ENCODE measurements at regions of chr11 and their contacts with region 1.

Region 1: GRCh38 chr11:131246663-131247062 is 123.8 kb upstream of the NTM start:
- DNase-seq: peak; percentile 31 to 90
- H3K4me3 ChIP-seq: peak overlapping the region in 1 of 4 experiments; percentile 32; a peak in 1 of 8 replicates
- H3K27ac ChIP-seq: no peak overlapping the region
- H3K4me1 ChIP-seq: peaks cover 2 to 6% (median 3%) of the 10 kb centered on the region in 4 experiments; a peak in 4 of 7 replicates
- H3K27me3 ChIP-seq: no peaks in the 10 kb centered on the region
- CTCF ChIP-seq: peak; percentile 87 to 97 (median 93)
- EP300 ChIP-seq: no peak
- POLR2A ChIP-seq: no peak
- RAD21 ChIP-seq: peak; percentile 83 to 89

Region 2: GRCh38 chr11:130999997-131000770 is 246.5 kb before region 1 on chr11:
- CTCF ChIA-PET with region 1: no interaction called
- POLR2A ChIA-PET with region 1: no interaction called
- DNase-seq: no peak
- H3K4me3 ChIP-seq: no peak overlapping the region
- H3K27ac ChIP-seq: no peak overlapping the region
- H3K4me1 ChIP-seq: no peaks in the 10 kb centered on the region
- H3K27me3 ChIP-seq: no peaks in the 10 kb centered on the region
- CTCF ChIP-seq: no peak
- EP300 ChIP-seq: no peak
- POLR2A ChIP-seq: no peak
- RAD21 ChIP-seq: no peak

Region 3: DNA sequence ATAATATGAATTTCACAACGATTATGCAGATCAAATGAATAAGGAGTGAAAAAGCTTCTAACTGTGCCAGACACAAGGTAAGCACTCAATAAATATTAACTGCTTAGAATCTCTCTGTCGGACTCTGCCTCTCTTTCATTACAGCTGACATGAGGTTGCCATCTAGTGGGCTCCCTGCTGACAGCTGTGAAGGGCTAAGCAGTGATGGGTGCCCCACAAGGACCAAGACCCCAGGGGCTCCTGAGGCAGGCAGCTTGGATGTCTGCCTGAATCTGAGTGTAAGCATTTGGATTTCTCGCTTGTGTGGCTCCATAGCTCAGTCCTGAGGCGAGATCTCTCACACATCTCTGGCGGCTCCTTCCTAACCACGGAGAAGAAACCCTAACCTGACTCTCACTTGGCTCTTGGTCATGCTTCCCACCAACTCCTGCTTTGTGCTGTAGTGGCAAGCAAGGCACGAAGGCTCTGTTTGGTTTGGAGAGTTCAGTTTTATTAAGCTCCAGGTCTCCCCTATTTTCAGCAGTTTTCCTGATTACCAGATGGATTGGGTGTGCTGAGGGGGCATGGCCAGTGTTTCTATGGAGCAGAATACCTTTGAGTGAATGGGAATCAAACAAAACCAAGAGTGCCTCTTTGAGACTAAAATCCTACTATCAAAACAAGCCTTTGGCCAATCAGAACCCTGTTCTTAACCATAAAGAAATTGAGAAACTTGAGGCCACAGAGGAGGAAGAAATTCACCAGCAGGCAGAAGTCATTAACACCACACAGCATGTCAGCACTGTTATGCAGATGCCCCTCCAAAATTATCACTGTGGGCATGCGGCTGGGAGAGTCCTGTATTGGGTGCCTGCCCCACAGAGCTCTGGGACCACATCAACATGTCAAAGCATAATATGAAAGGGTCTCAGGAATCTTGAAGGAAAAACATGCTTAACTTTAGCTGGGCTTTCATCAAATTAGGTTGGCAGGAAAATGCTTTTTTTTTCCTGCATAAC is 29.1 kb before region 1 on chr11:
- CTCF ChIA-PET with region 1: interaction called, 17 read pairs
- POLR2A ChIA-PET with region 1: interaction called, 3 read pairs
- DNase-seq: no peak
- H3K4me3 ChIP-seq: no peak overlapping the region
- H3K27ac ChIP-seq: peak overlapping the region; percentile 52; the same call in 1 of the 2 replicates
- H3K4me1 ChIP-seq: peaks cover 4 to 26% (median 17%) of the 10 kb centered on the region in 4 experiments
- H3K27me3 ChIP-seq: no peaks in the 10 kb centered on the region; a peak in 2 of 7 replicates
- CTCF ChIP-seq: peak in 2 of 3 experiments; percentile 32 to 35; a peak in 3 of 4 replicates
- EP300 ChIP-seq: no peak
- POLR2A ChIP-seq: no peak
- RAD21 ChIP-seq: peak; percentile 37 to 62; a peak in 3 of 4 replicates

Region 4: DNA sequence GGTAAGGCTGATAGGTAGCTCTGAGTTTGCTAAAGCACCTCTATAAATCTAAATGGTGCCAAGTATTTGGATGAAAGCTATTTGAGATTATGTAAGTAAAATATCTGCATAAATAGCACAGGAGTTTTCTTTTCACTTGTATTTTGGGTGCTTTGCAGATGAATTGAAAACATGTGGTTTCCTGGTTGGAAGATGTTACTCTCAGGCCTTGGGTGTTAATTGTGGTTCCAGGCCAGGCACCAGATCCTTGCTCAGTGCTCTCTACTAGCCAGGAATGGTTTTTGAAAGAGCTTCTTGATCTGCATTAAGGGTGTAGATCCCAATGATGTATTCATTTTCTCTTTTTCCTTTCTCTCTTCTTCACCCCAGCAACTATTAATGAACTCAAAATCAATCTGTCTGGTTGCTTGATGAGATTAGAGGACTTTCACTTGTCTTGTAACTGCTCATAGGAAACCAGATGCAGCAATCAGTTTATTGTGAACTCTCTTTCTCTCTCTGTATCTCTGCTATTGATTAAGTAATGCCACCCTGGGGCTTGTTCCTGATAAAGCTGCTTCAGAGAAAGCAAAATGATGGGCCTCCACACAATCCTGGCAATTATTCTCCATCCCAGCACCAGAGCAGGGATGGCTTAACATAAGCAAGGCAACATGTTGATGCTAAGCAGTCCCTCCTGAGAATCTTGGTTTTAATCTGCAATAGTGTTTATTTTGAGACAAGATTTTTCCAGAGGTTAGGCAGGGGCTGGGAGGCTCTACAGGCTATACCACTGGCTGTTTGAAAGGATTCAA is 23.3 kb before region 1 on chr11:
- CTCF ChIA-PET with region 1: interaction called, 17 read pairs
- POLR2A ChIA-PET with region 1: interaction called, 3 read pairs
- DNase-seq: no peak
- H3K4me3 ChIP-seq: no peak overlapping the region
- H3K27ac ChIP-seq: no peak overlapping the region; the same call in 1 of the 2 replicates
- H3K4me1 ChIP-seq: peaks cover 5 to 21% (median 17%) of the 10 kb centered on the region in 4 experiments; a peak in 6 of 7 replicates
- H3K27me3 ChIP-seq: no peaks in the 10 kb centered on the region
- CTCF ChIP-seq: no peak
- EP300 ChIP-seq: no peak
- POLR2A ChIP-seq: no peak
- RAD21 ChIP-seq: no peak

Region 5: DNA sequence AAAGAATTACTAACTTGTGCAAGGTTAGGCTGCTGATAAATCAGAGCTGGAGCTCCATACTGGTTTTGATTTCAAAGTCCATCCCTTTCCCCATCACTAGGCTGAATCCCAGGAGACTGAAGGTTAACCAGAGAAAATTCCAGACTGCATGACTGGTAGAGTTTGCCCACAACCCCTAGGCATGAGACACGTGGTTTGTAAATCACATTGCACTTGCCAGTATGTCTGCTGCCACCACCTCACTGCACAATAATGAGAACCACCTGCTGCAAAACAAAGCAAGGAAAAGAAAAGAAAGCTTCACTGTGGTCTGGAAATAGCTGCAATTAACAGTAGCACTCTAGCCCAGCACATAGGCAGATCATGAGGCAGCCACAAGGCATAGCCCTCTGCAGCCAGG is 56.2 kb after region 1 on chr11:
- CTCF ChIA-PET with region 1: interaction called, 13 read pairs
- POLR2A ChIA-PET with region 1: interaction called, 14 read pairs
- DNase-seq: no peak
- H3K4me3 ChIP-seq: no peak overlapping the region
- H3K27ac ChIP-seq: no peak overlapping the region
- H3K4me1 ChIP-seq: peaks cover 0 to 1% (median 0%) of the 10 kb centered on the region in 4 experiments; a peak in 1 of 7 replicates
- H3K27me3 ChIP-seq: no peaks in the 10 kb centered on the region
- CTCF ChIP-seq: no peak
- EP300 ChIP-seq: no peak
- POLR2A ChIP-seq: no peak; a peak in 1 of 3 replicates
- RAD21 ChIP-seq: no peak

Region 6: DNA sequence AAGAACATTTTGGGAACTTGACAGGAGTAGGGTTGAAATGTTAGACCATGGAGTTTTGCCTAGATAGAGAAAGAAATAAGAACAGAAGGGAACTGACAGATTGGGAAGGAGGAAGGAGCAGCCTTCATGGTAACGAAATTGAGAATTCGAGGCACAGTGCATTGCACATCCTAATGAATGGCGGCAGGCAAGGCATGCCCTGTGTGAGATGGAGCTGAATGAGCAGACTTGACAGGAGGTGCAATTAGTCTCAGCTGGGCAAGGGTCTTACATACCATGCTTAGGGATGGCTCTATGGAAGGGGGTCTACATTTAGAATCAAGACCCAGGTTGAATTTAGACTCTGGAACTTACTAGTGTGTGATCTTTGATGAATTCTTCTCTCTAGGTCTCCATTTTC is 98.7 kb after region 1 on chr11:
- CTCF ChIA-PET with region 1: no interaction called
- POLR2A ChIA-PET with region 1: no interaction called
- DNase-seq: no peak
- H3K4me3 ChIP-seq: no peak overlapping the region
- H3K27ac ChIP-seq: no peak overlapping the region
- H3K4me1 ChIP-seq: no peaks in the 10 kb centered on the region
- H3K27me3 ChIP-seq: no peaks in the 10 kb centered on the region
- CTCF ChIP-seq: no peak
- EP300 ChIP-seq: no peak
- POLR2A ChIP-seq: no peak
- RAD21 ChIP-seq: no peak

Region 7: GRCh38 chr11:131356206-131356605 is 109.5 kb after region 1 on chr11:
- CTCF ChIA-PET with region 1: interaction called, 10 read pairs
- POLR2A ChIA-PET with region 1: no interaction called
- DNase-seq: no peak
- H3K4me3 ChIP-seq: no peak overlapping the region
- H3K27ac ChIP-seq: no peak overlapping the region
- H3K4me1 ChIP-seq: peaks cover 0 to 12% (median 6%) of the 10 kb centered on the region in 4 experiments; a peak in 4 of 7 replicates
- H3K27me3 ChIP-seq: no peaks in the 10 kb centered on the region
- CTCF ChIP-seq: no peak
- EP300 ChIP-seq: no peak
- POLR2A ChIP-seq: no peak
- RAD21 ChIP-seq: no peak

Region 8: GRCh38 chr11:131504199-131504949 is 257.7 kb after region 1 on chr11:
- CTCF ChIA-PET with region 1: interaction called, 10 read pairs
- POLR2A ChIA-PET with region 1: no interaction called
- DNase-seq: peak; percentile 46 to 84
- H3K4me3 ChIP-seq: no peak overlapping the region
- H3K27ac ChIP-seq: no peak overlapping the region
- H3K4me1 ChIP-seq: peaks cover 0 to 6% (median 4%) of the 10 kb centered on the region in 4 experiments; a peak in 4 of 7 replicates
- H3K27me3 ChIP-seq: no peaks in the 10 kb centered on the region; a peak in 1 of 7 replicates
- CTCF ChIP-seq: peak; percentile 73 to 86 (median 84)
- EP300 ChIP-seq: peak in 1 of 2 experiments; percentile 70; a peak in 1 of 3 replicates
- POLR2A ChIP-seq: no peak
- RAD21 ChIP-seq: peak; percentile 89 to 92

Measured in H1 (cell line).